ENCODE measurements at regions of chr2 and their contacts with region 1.

Region 1: GRCh38 chr2:102753563-102754159 is 8.2 kb upstream of the TMEM182 start:
- DNase-seq: peak; percentile 77
- ATAC-seq: peak; percentile 76
- H3K4me3 ChIP-seq: no peak overlapping the region
- H3K27ac ChIP-seq: no peak overlapping the region
- H3K4me1 ChIP-seq: no peaks in the 10 kb centered on the region
- H3K27me3 ChIP-seq: no peaks in the 10 kb centered on the region
- CTCF ChIP-seq: peak; percentile 77
- EP300 ChIP-seq: no peak
- POLR2A ChIP-seq: no peak
- RAD21 ChIP-seq: peak; percentile 48; the same call in 1 of the 2 replicates

Region 2: GRCh38 chr2:102703748-102704147 is 49.9 kb before region 1 on chr2:
- CTCF ChIA-PET with region 1: no interaction called
- POLR2A ChIA-PET with region 1: no interaction called
- in situ Hi-C with region 1: no loop called
- intact Hi-C with region 1: no loop called
- DNase-seq: peak; percentile 33
- ATAC-seq: peak; percentile 88
- H3K4me3 ChIP-seq: no peak overlapping the region
- H3K27ac ChIP-seq: no peak overlapping the region
- H3K4me1 ChIP-seq: peaks cover 14% of the 10 kb centered on the region
- H3K27me3 ChIP-seq: no peaks in the 10 kb centered on the region
- CTCF ChIP-seq: peak; percentile 71
- EP300 ChIP-seq: no peak
- POLR2A ChIP-seq: no peak
- RAD21 ChIP-seq: 0 out of 2 replicates have a peak, but pooled peaks have one; percentile 52

Region 3: DNA sequence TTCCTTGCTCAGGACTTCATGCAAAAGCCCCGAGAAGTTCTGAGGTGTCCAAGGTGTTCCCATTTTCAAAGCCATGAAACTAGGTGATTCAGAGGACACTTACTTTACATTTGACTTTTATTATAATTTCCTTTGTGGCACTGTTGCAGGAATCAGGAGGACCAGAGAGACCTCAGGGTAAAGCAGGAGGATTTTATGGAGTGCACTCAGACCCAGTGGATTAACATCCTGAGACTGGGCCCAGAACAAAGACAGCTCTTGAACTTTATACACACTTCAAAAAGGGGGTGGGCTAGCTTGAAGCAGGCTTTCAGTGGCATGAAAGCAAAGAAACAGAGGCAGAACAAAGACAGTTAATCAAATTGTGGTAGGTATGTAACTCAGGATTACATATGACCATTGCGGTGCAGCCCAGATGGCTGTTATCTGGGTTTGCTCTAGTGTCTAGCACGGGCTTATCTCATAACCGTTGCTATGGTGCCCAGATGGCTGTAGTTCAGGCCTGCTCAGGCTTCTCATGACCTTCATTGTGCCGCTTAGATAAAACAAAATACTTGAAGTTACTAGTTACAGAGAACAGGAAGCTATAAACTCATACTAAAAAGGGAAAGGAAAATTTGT is 47.5 kb after region 1 on chr2:
- CTCF ChIA-PET with region 1: interaction called, 44 read pairs
- POLR2A ChIA-PET with region 1: interaction called, 4 read pairs
- in situ Hi-C with region 1: loop called (anchors 5 kb)
- intact Hi-C with region 1: loop called (anchors 1 kb)
- DNase-seq: no peak
- ATAC-seq: no peak
- H3K4me3 ChIP-seq: no peak overlapping the region
- H3K27ac ChIP-seq: no peak overlapping the region
- H3K4me1 ChIP-seq: peaks cover 37% of the 10 kb centered on the region
- H3K27me3 ChIP-seq: no peaks in the 10 kb centered on the region
- CTCF ChIP-seq: no peak
- EP300 ChIP-seq: no peak
- POLR2A ChIP-seq: no peak
- RAD21 ChIP-seq: no peak

Region 4: GRCh38 chr2:102806250-102806837 is 52.7 kb after region 1 on chr2:
- CTCF ChIA-PET with region 1: interaction called, 44 read pairs
- POLR2A ChIA-PET with region 1: interaction called, 4 read pairs
- in situ Hi-C with region 1: loop called (anchors 5 kb)
- intact Hi-C with region 1: loop called (anchors 1 kb)
- DNase-seq: peak; percentile 73
- ATAC-seq: peak; percentile 91
- H3K4me3 ChIP-seq: no peak overlapping the region
- H3K27ac ChIP-seq: no peak overlapping the region
- H3K4me1 ChIP-seq: peaks cover 27% of the 10 kb centered on the region
- H3K27me3 ChIP-seq: no peaks in the 10 kb centered on the region
- CTCF ChIP-seq: peak; percentile 94
- EP300 ChIP-seq: no peak
- POLR2A ChIP-seq: no peak
- RAD21 ChIP-seq: peak; percentile 78